Esophagus squamous epithelium (tissue), 5 donors: ENCODE measurements at regions of chr6 and their contacts with region 1.

Region 1: GRCh38 chr6:30883685-30884520 is at the start of gene DDR1:
- DNase-seq: no peak
- H3K4me3 ChIP-seq: peak within 1 kb of the TSS; percentile 55 to 97 (median 90)
- H3K27ac ChIP-seq: peak within 1 kb of the TSS; percentile 93 to 99 (median 98)
- H3K4me1 ChIP-seq: peaks cover 22 to 81% (median 47%) of the 10 kb centered on the region in 3 donors
- H3K27me3 ChIP-seq: no peaks in the 10 kb centered on the region
- CTCF ChIP-seq: peak in 1 of 6 experiments; percentile 10
- POLR2A ChIP-seq: peak in 3 of 4 donors; percentile 64 to 79 (median 68)
- total RNA-seq, gene DDR1: 131 to 261 (median 140) TPM

Region 2: DNA sequence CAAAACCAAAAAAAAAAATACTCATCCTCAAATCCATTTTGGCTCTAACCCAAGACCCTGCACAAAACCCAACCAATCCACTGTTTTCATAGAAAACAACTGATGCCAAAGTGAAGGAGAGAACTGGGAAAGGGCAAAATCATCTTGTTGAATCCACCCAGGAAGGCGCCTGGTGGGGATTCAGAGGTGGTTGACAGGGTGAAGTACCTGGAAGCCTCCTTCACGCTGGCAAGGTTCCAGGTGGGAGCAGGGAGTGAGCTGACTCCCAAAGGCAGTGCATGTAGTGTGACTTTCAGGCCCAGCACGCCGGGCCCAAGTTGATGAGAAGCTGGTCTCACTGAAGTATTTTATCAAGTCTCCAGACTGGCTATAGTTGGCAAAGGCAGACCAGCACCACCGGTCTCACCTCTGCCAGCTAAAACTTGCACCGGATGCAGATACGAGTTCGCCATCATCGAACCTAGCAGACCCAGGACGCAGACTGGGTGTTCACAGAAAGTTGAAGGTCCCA is 283.4 kb before region 1 on chr6:
- intact Hi-C with region 1: no loop called
- DNase-seq: no peak
- H3K4me3 ChIP-seq: no peak overlapping the region
- H3K27ac ChIP-seq: no peak overlapping the region
- H3K4me1 ChIP-seq: peaks cover 0 to 23% (median 0%) of the 10 kb centered on the region in 3 donors
- H3K27me3 ChIP-seq: no peaks in the 10 kb centered on the region
- CTCF ChIP-seq: no peak
- POLR2A ChIP-seq: no peak

Region 3: GRCh38 chr6:30686908-30687658 is 196.8 kb before region 1 on chr6:
- intact Hi-C with region 1: loop called (anchors 10 kb)
- DNase-seq: peak; percentile 86
- H3K4me3 ChIP-seq: peak overlapping the region; percentile 73 to 92 (median 82)
- H3K27ac ChIP-seq: peak overlapping the region; percentile 96 to 99 (median 98)
- H3K4me1 ChIP-seq: peaks cover 57 to 88% (median 65%) of the 10 kb centered on the region in 3 donors
- H3K27me3 ChIP-seq: no peaks in the 10 kb centered on the region
- CTCF ChIP-seq: no peak
- POLR2A ChIP-seq: peak in 2 of 4 donors; percentile 29 to 58

Region 4: DNA sequence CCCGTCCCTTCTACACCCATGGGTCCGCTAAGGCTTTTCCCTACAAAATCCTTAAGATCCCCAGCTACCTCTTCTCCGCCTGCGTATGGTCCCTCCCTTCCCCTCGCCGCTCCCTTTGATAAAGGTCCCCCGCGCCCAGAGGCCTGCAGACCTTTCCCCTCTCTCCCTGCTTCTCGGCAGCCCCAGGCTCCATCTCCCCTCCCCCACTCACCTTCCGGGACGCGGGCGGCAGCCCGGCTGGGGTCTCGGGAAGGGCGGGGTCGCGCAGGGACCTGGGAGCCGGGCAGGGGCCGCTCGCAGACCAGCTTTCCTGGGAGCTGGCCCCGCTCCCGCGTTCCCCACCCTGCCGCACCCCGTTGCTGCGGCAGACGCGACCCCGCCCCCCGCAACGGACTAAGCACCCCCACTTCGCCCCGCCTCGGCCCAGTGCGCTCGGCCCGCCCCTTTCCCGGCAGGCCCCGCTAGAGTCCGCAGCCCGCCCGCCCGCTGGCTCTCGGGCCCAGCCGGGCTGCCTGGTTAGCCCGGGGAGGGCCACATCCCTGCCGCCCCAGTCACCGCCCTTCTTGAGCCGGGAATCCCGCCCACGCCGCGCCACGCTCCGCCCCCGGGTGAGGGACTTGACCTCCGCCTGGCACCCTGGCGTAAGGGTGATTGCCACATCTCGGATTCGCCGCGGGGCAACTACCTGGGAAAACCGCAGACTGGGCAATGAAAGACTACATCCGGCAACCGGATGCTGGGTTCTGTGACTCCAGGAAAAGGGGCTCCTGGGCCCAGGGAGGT is 141.4 kb before region 1 on chr6 and contains the start of gene FLOT1:
- intact Hi-C with region 1: loop called (anchors 5 kb)
- DNase-seq: peak; percentile 75
- H3K4me3 ChIP-seq: peak within 1 kb of the TSS; percentile 58 to 90 (median 82)
- H3K27ac ChIP-seq: peak within 1 kb of the TSS; percentile 92 to 99 (median 96)
- H3K4me1 ChIP-seq: peaks cover 18 to 79% (median 36%) of the 10 kb centered on the region in 3 donors
- H3K27me3 ChIP-seq: no peaks in the 10 kb centered on the region
- CTCF ChIP-seq: peak in 2 of 6 experiments; percentile 1 to 6
- POLR2A ChIP-seq: peak in 3 of 4 donors; percentile 37 to 74 (median 53)
- total RNA-seq, gene FLOT1: 46.7 to 88.8 (median 64.4) TPM

Region 5: GRCh38 chr6:30793521-30794194 is 90.2 kb before region 1 on chr6:
- intact Hi-C with region 1: no loop called
- DNase-seq: no peak
- H3K4me3 ChIP-seq: peak overlapping the region in 1 of 4 donors; percentile 15
- H3K27ac ChIP-seq: peak overlapping the region; percentile 42 to 85 (median 65)
- H3K4me1 ChIP-seq: peaks cover 0 to 34% (median 4%) of the 10 kb centered on the region in 3 donors
- H3K27me3 ChIP-seq: no peaks in the 10 kb centered on the region
- CTCF ChIP-seq: no peak
- POLR2A ChIP-seq: no peak

Region 6: GRCh38 chr6:30810813-30811329 is 73.0 kb before region 1 on chr6:
- intact Hi-C with region 1: no loop called
- DNase-seq: no peak
- H3K4me3 ChIP-seq: no peak overlapping the region
- H3K27ac ChIP-seq: peak overlapping the region in 3 of 4 donors; percentile 36 to 48 (median 36)
- H3K4me1 ChIP-seq: peaks cover 7 to 45% (median 8%) of the 10 kb centered on the region in 3 donors
- H3K27me3 ChIP-seq: no peaks in the 10 kb centered on the region
- CTCF ChIP-seq: peak in 1 of 6 experiments; percentile 32
- POLR2A ChIP-seq: no peak

Region 7: DNA sequence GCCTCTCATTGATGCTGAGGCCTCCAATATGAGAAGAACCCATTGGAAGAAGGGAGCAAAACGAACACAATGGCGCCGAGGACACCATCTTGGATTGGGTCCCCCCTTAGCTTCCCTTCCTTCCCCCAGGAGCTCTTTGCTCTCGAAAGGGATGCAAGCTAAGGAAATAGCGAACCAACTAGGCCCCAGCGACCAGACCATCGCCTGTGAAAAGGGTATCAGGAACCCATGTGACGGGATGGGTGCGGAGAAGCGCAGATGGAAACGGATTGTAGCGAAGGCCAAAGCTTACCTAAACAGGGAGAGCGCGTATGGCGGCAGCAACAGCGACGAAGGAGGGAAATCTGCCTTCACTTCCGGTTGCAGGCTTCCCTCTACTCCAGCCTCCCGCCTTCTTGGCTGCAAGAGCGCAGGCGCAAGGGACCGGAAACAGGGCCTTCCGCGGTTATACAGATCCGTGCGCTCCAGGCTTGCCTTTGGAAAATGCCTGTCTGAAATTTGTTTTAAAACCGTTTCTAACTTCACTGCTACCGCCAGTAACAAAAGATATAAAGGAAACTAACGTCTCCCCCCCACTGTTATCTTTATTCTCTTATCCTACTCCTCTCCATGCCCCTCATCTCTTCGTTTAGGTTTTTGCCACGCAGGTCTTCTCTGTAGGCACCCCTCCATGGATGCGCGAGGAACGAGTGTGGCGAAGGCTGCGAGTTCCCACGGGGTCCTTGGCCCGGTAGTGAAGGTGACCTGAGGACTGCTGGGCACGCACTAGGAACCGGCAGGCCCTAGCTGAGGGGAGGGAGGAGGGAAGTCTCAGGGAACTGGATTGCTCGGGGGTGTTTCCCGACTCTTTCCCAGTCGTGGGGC is 658.0 kb after region 1 on chr6 and contains the start of gene DDX39B:
- intact Hi-C with region 1: no loop called
- DNase-seq: peak; percentile 80
- H3K4me3 ChIP-seq: peak within 1 kb of the TSS; percentile 58 to 87 (median 74)
- H3K27ac ChIP-seq: peak within 1 kb of the TSS; percentile 93 to 99 (median 94)
- H3K4me1 ChIP-seq: peaks cover 24 to 60% (median 40%) of the 10 kb centered on the region in 3 donors
- H3K27me3 ChIP-seq: no peaks in the 10 kb centered on the region
- CTCF ChIP-seq: peak in 3 of 6 experiments; percentile 7 to 14 (median 11)
- POLR2A ChIP-seq: peak in 3 of 4 donors; percentile 45 to 80 (median 53)
- total RNA-seq, gene DDX39B: 173 to 320 (median 259) TPM